B cell (primary cell): ENCODE measurements at regions of chr5 and their contacts with region 1.

Region 1: DNA sequence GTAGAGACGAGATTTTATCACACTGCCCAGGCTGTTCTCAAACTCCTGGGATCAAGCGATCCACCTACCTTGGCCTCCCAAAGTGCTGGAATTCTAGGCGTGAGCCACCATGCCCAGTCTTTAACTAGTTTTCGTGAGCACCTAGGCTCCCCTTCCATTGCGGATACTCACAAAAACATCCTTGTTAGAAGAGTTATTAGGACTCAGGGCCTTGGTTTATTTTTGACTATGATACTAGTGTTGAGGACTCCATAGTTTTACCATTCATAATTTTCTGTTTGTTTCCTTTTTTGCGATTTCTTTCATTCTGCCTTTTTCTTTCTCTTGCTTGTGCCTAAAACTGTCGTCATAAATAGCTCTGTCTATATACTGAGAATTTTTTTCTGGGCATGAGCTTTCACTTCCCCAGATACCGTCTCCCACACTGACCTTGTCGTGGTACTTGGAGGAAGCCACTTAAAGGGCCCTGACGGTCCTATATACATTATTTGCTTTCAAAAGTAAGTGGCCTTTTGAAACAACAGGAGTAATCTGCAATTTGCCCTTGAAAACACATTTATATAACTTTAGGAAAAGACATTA is 5.2 kb downstream of the F2R start:
- DNase-seq: peak; percentile 26
- ATAC-seq: peak; percentile 43
- H3K4me3 ChIP-seq: no peak overlapping the region
- H3K4me3 Mint-ChIP-seq: no peak overlapping the region
- H3K27ac ChIP-seq: no peak overlapping the region
- H3K27ac Mint-ChIP-seq: no peak overlapping the region
- H3K4me1 ChIP-seq: peaks cover 9 to 14% of the 10 kb centered on the region in 2 donors
- H3K4me1 Mint-ChIP-seq: peaks cover 16% of the 10 kb centered on the region
- H3K27me3 ChIP-seq: peaks cover 0 to 26% (median 17%) of the 10 kb centered on the region in 4 experiments
- H3K27me3 Mint-ChIP-seq: peaks cover 28% of the 10 kb centered on the region
- CTCF ChIP-seq: no peak

Region 2: GRCh38 chr5:76710991-76711390 is 10.1 kb before region 1 on chr5:
- CTCF ChIA-PET with region 1: no interaction called
- POLR2A ChIA-PET with region 1: no interaction called
- intact Hi-C with region 1: no loop called
- DNase-seq: no peak
- ATAC-seq: no peak
- H3K4me3 ChIP-seq: no peak overlapping the region
- H3K4me3 Mint-ChIP-seq: no peak overlapping the region
- H3K27ac ChIP-seq: no peak overlapping the region
- H3K27ac Mint-ChIP-seq: no peak overlapping the region
- H3K4me1 ChIP-seq: peaks cover 14 to 16% of the 10 kb centered on the region in 2 donors
- H3K4me1 Mint-ChIP-seq: peaks cover 16% of the 10 kb centered on the region
- H3K27me3 ChIP-seq: peaks cover 0 to 15% (median 8%) of the 10 kb centered on the region in 4 experiments
- H3K27me3 Mint-ChIP-seq: peaks cover 28% of the 10 kb centered on the region
- CTCF ChIP-seq: no peak

Region 3: GRCh38 chr5:76736679-76737556 is 15.8 kb after region 1 on chr5:
- CTCF ChIA-PET with region 1: no interaction called
- POLR2A ChIA-PET with region 1: no interaction called
- intact Hi-C with region 1: loop called (anchors 2 kb)
- DNase-seq: no peak
- ATAC-seq: no peak
- H3K4me3 ChIP-seq: no peak overlapping the region
- H3K4me3 Mint-ChIP-seq: no peak overlapping the region
- H3K27ac ChIP-seq: no peak overlapping the region
- H3K27ac Mint-ChIP-seq: no peak overlapping the region
- H3K4me1 ChIP-seq: peaks cover 0 to 13% of the 10 kb centered on the region in 2 donors
- H3K4me1 Mint-ChIP-seq: peaks cover 19% of the 10 kb centered on the region
- H3K27me3 ChIP-seq: peaks cover 0 to 2% (median 1%) of the 10 kb centered on the region in 4 experiments
- H3K27me3 Mint-ChIP-seq: peaks cover 15% of the 10 kb centered on the region
- CTCF ChIP-seq: no peak